Mammary epithelial cell (primary cell): ENCODE measurements at regions of chr22 and their contacts with region 1.

Region 1: DNA sequence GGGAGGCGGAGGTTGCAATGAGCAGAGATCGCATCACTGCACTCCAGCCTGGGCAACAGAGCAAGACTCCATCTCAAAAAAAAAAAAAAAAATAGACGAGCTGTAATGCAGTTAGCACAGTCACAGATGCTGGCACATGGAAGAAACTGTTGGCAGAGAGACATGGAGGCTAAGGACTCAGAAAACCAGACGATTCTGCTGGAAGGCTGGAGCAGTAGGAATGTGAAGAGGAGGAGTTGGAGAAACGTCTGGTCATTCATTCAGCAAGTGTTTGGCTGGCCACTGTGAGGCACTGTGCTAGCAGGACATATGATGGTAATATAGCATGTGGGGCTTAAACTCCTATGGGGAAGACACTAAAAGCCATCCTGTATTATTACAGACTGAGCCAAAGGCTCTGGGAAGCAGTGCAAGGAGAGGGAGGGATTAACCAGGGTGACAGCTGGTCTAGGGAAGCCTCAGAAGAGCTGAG is 5.0 kb downstream of the UQCR10 start:
- DNase-seq: no peak
- H3K4me3 ChIP-seq: no peak overlapping the region
- H3K27ac ChIP-seq: no peak overlapping the region
- H3K4me1 ChIP-seq: peaks cover 16% of the 10 kb centered on the region
- H3K27me3 ChIP-seq: no peaks in the 10 kb centered on the region
- CTCF ChIP-seq: peak; percentile 53 to 58

Region 2: DNA sequence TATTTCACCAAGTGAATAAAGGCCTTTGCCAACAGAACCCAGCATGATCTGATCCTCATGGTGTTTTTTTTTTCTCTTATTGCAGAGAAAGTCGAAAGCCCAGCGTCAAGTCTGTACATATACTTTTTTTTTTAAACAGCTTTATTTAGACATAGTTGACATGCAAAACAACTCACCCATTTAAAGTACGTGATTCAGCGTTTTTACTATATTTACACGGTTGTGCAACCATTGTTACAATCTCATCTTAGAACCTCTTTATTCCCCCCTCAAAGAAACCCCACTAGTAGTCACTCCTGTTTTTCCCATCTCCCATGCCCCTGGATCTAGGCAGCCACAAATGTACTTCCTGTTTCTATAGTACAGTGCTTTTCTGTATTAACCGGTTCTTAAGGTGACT is 363.3 kb before region 1 on chr22:
- CTCF ChIA-PET with region 1: no interaction called
- dilution Hi-C with region 1: no loop called
- in situ Hi-C with region 1: no loop called
- intact Hi-C with region 1: no loop called
- DNase-seq: no peak
- H3K4me3 ChIP-seq: no peak overlapping the region
- H3K27ac ChIP-seq: no peak overlapping the region
- H3K4me1 ChIP-seq: no peaks in the 10 kb centered on the region
- H3K27me3 ChIP-seq: peaks cover 3% of the 10 kb centered on the region
- CTCF ChIP-seq: no peak

Region 3: GRCh38 chr22:29689880-29690213 is 82.4 kb before region 1 on chr22:
- CTCF ChIA-PET with region 1: no interaction called
- dilution Hi-C with region 1: loop called (anchors 5 kb)
- in situ Hi-C with region 1: no loop called
- intact Hi-C with region 1: no loop called
- DNase-seq: peak; percentile 23
- H3K4me3 ChIP-seq: no peak overlapping the region
- H3K27ac ChIP-seq: no peak overlapping the region
- H3K4me1 ChIP-seq: peaks cover 10% of the 10 kb centered on the region
- H3K27me3 ChIP-seq: no peaks in the 10 kb centered on the region
- CTCF ChIP-seq: peak; percentile 59 to 81

Region 4: GRCh38 chr22:29786031-29786430 is 13.8 kb after region 1 on chr22:
- CTCF ChIA-PET with region 1: interaction called, 22 read pairs
- dilution Hi-C with region 1: no loop called
- in situ Hi-C with region 1: no loop called
- intact Hi-C with region 1: no loop called
- DNase-seq: no peak
- H3K4me3 ChIP-seq: no peak overlapping the region
- H3K27ac ChIP-seq: no peak overlapping the region
- H3K4me1 ChIP-seq: peaks cover 19% of the 10 kb centered on the region
- H3K27me3 ChIP-seq: no peaks in the 10 kb centered on the region
- CTCF ChIP-seq: no peak

Region 5: GRCh38 chr22:29855611-29856181 is 83.5 kb after region 1 on chr22:
- CTCF ChIA-PET with region 1: no interaction called
- dilution Hi-C with region 1: no loop called
- in situ Hi-C with region 1: no loop called
- intact Hi-C with region 1: no loop called
- DNase-seq: no peak
- H3K4me3 ChIP-seq: no peak overlapping the region
- H3K27ac ChIP-seq: no peak overlapping the region
- H3K4me1 ChIP-seq: no peaks in the 10 kb centered on the region
- H3K27me3 ChIP-seq: no peaks in the 10 kb centered on the region
- CTCF ChIP-seq: no peak